Gastrocnemius medialis (tissue), 4 donors: ENCODE measurements at regions of chr16 and their contacts with region 1.

Region 1: DNA sequence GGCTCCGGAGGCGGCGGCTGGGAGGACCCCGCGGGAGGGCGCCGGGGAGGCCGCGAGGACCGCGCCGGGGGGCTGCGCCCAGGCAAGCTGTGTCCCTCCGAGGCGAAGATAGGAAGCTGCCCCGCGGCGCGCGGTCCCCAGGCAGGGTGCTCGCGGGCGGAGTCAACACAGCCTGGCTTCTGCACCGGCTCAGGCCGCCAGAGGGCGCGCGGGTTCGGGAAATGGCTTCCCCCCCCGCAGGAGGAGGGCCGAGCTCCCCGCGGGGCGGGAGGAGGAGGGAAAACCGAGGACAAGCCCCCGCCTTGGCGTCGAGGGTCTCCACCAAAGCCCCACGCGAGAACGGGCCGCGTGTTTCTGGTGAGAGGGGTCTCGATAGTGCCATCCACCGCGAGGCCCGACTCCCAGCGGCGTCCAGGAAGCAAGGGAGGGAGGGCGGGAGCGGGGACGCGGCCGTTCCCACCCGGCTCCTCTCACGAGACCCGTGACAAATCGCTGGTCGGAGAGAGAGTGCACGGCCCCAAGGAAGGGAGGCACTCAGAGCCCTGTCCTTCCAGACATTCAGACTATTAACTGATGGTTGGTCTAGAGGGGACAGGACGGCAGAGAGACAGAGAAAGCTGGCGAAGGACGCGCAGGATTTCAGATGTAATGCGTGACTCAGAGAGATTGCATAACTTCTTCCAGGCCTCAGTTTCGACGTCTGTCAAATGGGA is 64.4 kb upstream of the DNAJA2 start:
- DNase-seq: peak; percentile 56 to 68
- ATAC-seq: peak; percentile 94 to 97
- H3K4me3 ChIP-seq: peak overlapping the region; percentile 64 to 78 (median 66)
- H3K27ac ChIP-seq: peak overlapping the region in 2 of 4 donors; percentile 19 to 46
- H3K4me1 ChIP-seq: no peaks in the 10 kb centered on the region
- H3K27me3 ChIP-seq: no peaks in the 10 kb centered on the region
- CTCF ChIP-seq: peak; percentile 66 to 91 (median 88)
- POLR2A ChIP-seq: no peak

Region 2: DNA sequence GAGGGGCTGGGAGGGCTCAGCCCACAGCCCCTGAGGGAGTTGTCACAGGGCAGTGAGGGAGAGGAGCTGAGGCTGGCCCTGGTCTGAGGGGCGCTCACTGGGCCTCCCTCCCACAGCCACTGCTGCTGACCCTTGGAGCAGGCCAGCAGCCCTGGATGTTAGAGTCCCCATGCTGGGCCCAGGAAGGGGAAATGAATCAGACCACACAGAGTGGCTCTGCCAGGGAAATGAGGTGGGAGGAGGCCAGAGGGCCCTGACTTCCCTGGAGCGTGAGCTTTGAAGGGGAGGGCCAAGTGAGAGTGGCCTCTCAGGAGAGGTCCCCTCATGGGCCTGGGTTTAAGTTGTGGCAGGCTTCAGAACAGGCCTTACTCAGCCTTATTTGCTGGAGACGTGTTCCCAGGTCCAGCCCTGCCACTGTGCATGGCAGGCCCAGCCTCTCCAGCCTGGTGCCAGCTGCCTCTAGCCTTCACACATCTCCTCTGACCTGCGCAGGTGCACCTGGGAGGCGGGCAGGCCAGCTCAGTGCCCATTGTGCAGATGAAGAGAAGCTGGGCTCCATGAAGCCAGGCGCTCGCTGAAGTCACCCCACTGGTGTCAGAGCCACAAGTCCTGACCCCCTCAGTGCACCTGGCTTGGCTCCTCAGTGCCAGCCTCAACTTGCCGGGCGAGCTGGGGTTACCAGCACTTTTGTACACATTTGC is 138.3 kb before region 1 on chr16:
- in situ Hi-C with region 1: no loop called
- intact Hi-C with region 1: no loop called
- DNase-seq: no peak
- ATAC-seq: no peak
- H3K4me3 ChIP-seq: no peak overlapping the region
- H3K27ac ChIP-seq: peak overlapping the region; percentile 48 to 63 (median 56)
- H3K4me1 ChIP-seq: peaks cover 28 to 39% of the 10 kb centered on the region in 2 donors
- H3K27me3 ChIP-seq: no peaks in the 10 kb centered on the region
- CTCF ChIP-seq: no peak
- POLR2A ChIP-seq: no peak

Region 3: GRCh38 chr16:47058295-47059086 is 20.6 kb after region 1 on chr16:
- in situ Hi-C with region 1: no loop called
- intact Hi-C with region 1: no loop called
- DNase-seq: no peak
- ATAC-seq: no peak
- H3K4me3 ChIP-seq: no peak overlapping the region
- H3K27ac ChIP-seq: no peak overlapping the region
- H3K4me1 ChIP-seq: no peaks in the 10 kb centered on the region
- H3K27me3 ChIP-seq: no peaks in the 10 kb centered on the region
- CTCF ChIP-seq: no peak
- POLR2A ChIP-seq: no peak

Region 4: DNA sequence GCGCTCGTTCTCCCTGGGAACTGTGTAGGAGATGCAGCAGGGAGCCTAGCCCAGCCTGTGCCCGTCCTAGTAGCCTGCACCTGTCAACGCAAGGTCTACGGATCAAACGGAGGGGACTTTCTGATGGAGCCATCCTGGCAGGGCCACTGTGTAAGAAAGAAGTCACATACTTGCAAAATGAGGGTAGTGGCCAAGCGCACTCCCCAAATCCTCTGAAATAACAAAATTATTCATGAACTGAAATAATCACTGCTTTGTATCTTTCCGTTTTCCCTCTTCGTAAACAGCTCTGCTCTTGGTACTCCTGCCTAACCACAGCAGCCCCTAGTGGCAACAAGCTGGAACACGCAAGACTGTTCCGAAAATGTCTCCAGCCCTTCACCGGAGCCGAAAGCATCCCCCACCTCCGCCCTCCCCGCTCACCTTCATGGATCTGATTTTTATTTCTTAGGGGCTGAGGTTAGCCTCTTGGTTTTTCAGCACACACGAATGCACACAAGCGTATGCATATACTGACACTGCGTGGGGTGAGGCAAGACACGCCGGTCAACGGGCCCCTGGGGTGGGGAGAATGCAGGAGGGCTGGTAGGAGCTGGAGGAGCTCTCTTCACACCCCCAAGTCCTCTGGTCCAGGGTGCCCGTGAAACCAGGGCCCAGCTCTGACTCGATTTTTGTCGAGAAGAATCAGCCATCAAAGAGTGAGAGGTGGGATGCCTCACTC is 1017.1 kb after region 1 on chr16:
- in situ Hi-C with region 1: no loop called
- intact Hi-C with region 1: loop called (anchors 10 kb)
- DNase-seq: peak in 1 of 2 donors; percentile 14
- ATAC-seq: peak; percentile 66 to 70
- H3K4me3 ChIP-seq: peak overlapping the region in 3 of 4 donors; percentile 22 to 32 (median 28)
- H3K27ac ChIP-seq: no peak overlapping the region
- H3K4me1 ChIP-seq: no peaks in the 10 kb centered on the region
- H3K27me3 ChIP-seq: no peaks in the 10 kb centered on the region
- CTCF ChIP-seq: peak; percentile 49 to 79 (median 50)
- POLR2A ChIP-seq: no peak